Activated B cell treated with CpG ODN at 0.5 μM for 24 hours (primary cell): ENCODE measurements at regions of chr14 and their contacts with region 1.

Region 1: DNA sequence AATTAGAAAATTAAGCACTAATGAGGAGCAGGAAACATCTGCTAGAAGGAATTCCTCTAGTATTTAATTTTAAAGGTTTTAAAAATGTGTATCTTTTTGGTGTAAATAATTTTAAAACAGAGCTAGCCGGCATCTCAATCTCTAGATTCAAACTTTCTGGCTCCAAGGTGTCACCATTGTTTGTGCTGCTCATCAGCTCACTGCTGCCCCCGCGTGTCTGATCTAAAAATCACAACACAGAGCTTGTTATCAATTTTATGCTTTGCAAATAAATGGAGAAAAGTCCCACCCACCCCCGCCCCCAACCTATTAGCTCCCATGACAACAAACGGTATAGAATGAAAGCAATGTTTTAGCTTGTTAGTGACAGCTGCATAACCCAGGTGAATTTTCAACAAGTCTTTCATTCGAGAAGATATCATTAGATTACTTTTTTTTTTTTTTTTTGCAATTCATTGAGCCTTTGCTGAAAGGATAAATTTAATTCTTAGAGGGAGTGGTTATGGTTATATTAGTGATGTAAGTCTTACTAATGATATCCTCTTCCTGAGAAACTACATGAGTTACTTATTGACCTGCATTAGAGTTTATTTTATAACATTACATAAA is 11.3 kb upstream of the ABHD12B start:
- DNase-seq: peak; percentile 78
- ATAC-seq: peak; percentile 73
- H3K4me3 Mint-ChIP-seq: peak overlapping the region; percentile 89
- H3K27ac Mint-ChIP-seq: peak overlapping the region; percentile 77
- H3K4me1 Mint-ChIP-seq: peaks cover 12% of the 10 kb centered on the region
- H3K27me3 Mint-ChIP-seq: no peaks in the 10 kb centered on the region
- CTCF ChIP-seq: peak; percentile 10

Region 2: DNA sequence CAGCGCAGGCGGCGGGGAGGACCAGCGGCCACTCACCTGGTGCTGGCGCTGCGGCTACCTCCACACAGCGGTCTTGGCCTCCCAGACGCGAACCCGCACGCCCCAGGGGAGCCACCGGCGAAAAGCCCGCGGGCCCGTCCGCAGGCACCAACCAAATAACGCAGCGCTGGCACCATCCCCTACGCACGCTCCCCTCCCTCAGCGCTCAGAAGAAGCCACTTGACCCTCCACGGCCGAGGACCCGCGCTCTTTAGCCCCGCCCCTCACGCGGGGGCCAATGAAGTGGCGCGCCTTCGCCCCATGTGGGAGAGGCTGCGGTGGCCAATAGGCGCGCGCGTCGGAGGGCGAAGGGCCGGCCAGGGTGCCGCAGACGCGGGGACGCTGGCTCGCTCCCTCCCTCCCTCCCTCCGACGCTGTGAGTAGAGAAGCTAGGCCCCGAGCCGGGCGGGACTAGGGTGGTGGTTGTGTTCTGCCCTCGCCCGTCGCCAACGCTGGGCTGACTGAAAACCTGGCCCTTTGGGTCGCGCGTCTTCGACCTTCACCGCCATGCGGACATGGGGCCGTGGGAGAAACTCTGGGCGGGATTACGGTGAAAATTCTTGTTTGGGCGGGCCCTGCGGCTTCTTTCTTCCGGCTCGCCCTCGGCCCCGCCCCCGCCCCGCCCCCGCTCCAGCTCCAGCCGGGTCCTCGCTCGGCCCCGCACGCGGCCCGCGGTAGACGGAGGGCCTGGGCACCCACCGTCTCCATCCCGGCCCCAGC is 548.4 kb before region 1 on chr14 and contains the starts of genes DMAC2L and L2HGDH:
- CTCF ChIA-PET with region 1: no interaction called
- POLR2A ChIA-PET with region 1: interaction called, 7 read pairs
- intact Hi-C with region 1: loop called (anchors 10 kb)
- DNase-seq: peak; percentile 91
- ATAC-seq: peak; percentile 94
- H3K4me3 Mint-ChIP-seq: peak within 1 kb of the TSS; percentile 93
- H3K27ac Mint-ChIP-seq: peak within 1 kb of the TSS; percentile 98
- H3K4me1 Mint-ChIP-seq: peaks cover 34% of the 10 kb centered on the region
- H3K27me3 Mint-ChIP-seq: no peaks in the 10 kb centered on the region
- CTCF ChIP-seq: no peak
- total RNA-seq, gene DMAC2L: 31.2 and 32.2 TPM in 2 replicates
- total RNA-seq, gene L2HGDH: 4.3 and 5.2 TPM in 2 replicates

Region 3: GRCh38 chr14:50619556-50620141 is 240.9 kb before region 1 on chr14:
- CTCF ChIA-PET with region 1: interaction called, 19 read pairs
- POLR2A ChIA-PET with region 1: no interaction called
- intact Hi-C with region 1: loop called (anchors 1 kb)
- DNase-seq: no peak
- ATAC-seq: peak; percentile 68
- H3K4me3 Mint-ChIP-seq: no peak overlapping the region
- H3K27ac Mint-ChIP-seq: no peak overlapping the region
- H3K4me1 Mint-ChIP-seq: peaks cover 5% of the 10 kb centered on the region
- H3K27me3 Mint-ChIP-seq: no peaks in the 10 kb centered on the region
- CTCF ChIP-seq: peak; percentile 30

Region 4: GRCh38 chr14:50756300-50756699 is 104.3 kb before region 1 on chr14:
- CTCF ChIA-PET with region 1: interaction called, 29 read pairs
- POLR2A ChIA-PET with region 1: interaction called, 8 read pairs
- intact Hi-C with region 1: loop called (anchors 1 kb)
- DNase-seq: peak; percentile 28
- ATAC-seq: peak; percentile 91
- H3K4me3 Mint-ChIP-seq: no peak overlapping the region
- H3K27ac Mint-ChIP-seq: no peak overlapping the region
- H3K4me1 Mint-ChIP-seq: peaks cover 6% of the 10 kb centered on the region
- H3K27me3 Mint-ChIP-seq: no peaks in the 10 kb centered on the region
- CTCF ChIP-seq: no peak

Region 5: GRCh38 chr14:50778721-50779483 is 81.7 kb before region 1 on chr14:
- CTCF ChIA-PET with region 1: interaction called, 216 read pairs
- POLR2A ChIA-PET with region 1: interaction called, 16 read pairs
- intact Hi-C with region 1: loop called (anchors 1 kb)
- DNase-seq: no peak
- ATAC-seq: peak; percentile 25
- H3K4me3 Mint-ChIP-seq: no peak overlapping the region
- H3K27ac Mint-ChIP-seq: peak overlapping the region; percentile 62
- H3K4me1 Mint-ChIP-seq: peaks cover 30% of the 10 kb centered on the region
- H3K27me3 Mint-ChIP-seq: no peaks in the 10 kb centered on the region
- CTCF ChIP-seq: no peak

Region 6: DNA sequence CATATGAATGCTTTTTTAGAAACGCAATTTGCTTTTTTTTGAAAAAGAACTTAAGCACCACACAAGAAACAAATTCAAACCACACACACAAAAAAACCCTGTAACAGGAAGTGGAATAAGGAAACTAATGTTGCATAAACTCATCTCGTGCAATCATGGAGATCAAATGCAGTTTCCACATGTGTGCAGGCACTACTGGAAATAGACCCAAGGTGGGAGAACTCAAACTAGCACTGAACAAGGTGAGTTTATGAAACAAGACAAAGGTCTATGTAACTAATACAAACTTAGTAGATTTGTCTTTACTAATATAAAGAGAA is 47.1 kb before region 1 on chr14:
- CTCF ChIA-PET with region 1: interaction called, 22 read pairs
- POLR2A ChIA-PET with region 1: no interaction called
- intact Hi-C with region 1: loop called (anchors 1 kb)
- DNase-seq: no peak
- ATAC-seq: peak; percentile 76
- H3K4me3 Mint-ChIP-seq: peak overlapping the region; percentile 80
- H3K27ac Mint-ChIP-seq: peak overlapping the region; percentile 92
- H3K4me1 Mint-ChIP-seq: peaks cover 67% of the 10 kb centered on the region
- H3K27me3 Mint-ChIP-seq: no peaks in the 10 kb centered on the region
- CTCF ChIP-seq: no peak

Region 7: DNA sequence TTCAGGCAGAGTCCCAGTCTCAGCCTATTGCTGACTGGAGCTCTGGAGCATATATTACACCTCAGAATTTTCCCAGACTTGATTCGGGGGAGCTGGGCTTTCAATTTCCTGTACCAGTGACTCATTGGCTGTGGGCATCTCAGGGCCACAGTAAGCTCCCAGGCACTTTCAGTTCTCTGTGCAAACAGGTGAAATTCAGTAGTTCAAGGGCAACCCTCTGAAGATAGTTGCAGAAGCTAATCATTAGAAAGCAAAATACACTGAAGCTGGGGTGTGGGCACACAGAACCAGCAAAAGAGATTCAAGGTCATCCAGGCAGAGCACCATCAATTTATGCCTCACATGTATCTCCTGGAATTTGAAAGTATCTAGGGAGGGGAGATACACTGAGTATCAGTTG is 21.5 kb before region 1 on chr14:
- CTCF ChIA-PET with region 1: interaction called, 46 read pairs
- POLR2A ChIA-PET with region 1: interaction called, 4 read pairs
- intact Hi-C with region 1: loop called (anchors 1 kb)
- DNase-seq: no peak
- ATAC-seq: peak; percentile 52
- H3K4me3 Mint-ChIP-seq: no peak overlapping the region
- H3K27ac Mint-ChIP-seq: no peak overlapping the region
- H3K4me1 Mint-ChIP-seq: peaks cover 36% of the 10 kb centered on the region
- H3K27me3 Mint-ChIP-seq: no peaks in the 10 kb centered on the region
- CTCF ChIP-seq: no peak

Region 8: GRCh38 chr14:51107801-51108200 is 247.2 kb after region 1 on chr14:
- CTCF ChIA-PET with region 1: no interaction called
- POLR2A ChIA-PET with region 1: no interaction called
- intact Hi-C with region 1: no loop called
- DNase-seq: no peak
- ATAC-seq: no peak
- H3K4me3 Mint-ChIP-seq: no peak overlapping the region
- H3K27ac Mint-ChIP-seq: no peak overlapping the region
- H3K4me1 Mint-ChIP-seq: peaks cover 3% of the 10 kb centered on the region
- H3K27me3 Mint-ChIP-seq: peaks cover 10% of the 10 kb centered on the region
- CTCF ChIP-seq: no peak